Mammary epithelial cell (primary cell): ENCODE measurements at regions of chr18 and their contacts with region 1.

Region 1: DNA sequence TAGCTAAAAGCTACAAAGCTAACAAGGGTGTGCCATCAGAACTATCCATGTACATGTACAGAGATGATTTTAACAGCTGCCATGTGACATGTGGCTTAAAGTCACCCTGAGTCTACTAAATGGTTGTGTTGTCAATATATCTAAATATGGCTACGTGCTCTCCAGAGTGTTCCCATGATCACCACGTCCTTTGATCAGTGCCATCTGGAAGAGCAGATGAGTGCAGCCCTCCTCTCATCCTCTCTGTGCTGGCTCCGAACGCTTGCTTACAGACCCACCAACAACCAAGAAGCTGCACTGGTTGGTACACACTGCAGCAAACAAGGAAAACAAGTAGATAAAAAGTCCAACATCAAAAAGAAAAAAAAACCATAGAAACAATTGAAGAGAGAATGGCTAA is 88.6 kb upstream of the NARS1 start:
- DNase-seq: no peak
- H3K4me3 ChIP-seq: no peak overlapping the region
- H3K27ac ChIP-seq: no peak overlapping the region
- H3K4me1 ChIP-seq: peaks cover 9% of the 10 kb centered on the region
- H3K27me3 ChIP-seq: no peaks in the 10 kb centered on the region
- CTCF ChIP-seq: no peak

Region 2: GRCh38 chr18:57630002-57630753 is 80.0 kb before region 1 on chr18:
- CTCF ChIA-PET with region 1: no interaction called
- dilution Hi-C with region 1: no loop called
- in situ Hi-C with region 1: no loop called
- intact Hi-C with region 1: loop called (anchors 1 kb)
- DNase-seq: peak; percentile 93
- H3K4me3 ChIP-seq: peak overlapping the region; percentile 64 to 79 (median 68)
- H3K27ac ChIP-seq: peak overlapping the region; percentile 45
- H3K4me1 ChIP-seq: peaks cover 14% of the 10 kb centered on the region
- H3K27me3 ChIP-seq: no peaks in the 10 kb centered on the region
- CTCF ChIP-seq: peak; percentile 53 to 82

Region 3: DNA sequence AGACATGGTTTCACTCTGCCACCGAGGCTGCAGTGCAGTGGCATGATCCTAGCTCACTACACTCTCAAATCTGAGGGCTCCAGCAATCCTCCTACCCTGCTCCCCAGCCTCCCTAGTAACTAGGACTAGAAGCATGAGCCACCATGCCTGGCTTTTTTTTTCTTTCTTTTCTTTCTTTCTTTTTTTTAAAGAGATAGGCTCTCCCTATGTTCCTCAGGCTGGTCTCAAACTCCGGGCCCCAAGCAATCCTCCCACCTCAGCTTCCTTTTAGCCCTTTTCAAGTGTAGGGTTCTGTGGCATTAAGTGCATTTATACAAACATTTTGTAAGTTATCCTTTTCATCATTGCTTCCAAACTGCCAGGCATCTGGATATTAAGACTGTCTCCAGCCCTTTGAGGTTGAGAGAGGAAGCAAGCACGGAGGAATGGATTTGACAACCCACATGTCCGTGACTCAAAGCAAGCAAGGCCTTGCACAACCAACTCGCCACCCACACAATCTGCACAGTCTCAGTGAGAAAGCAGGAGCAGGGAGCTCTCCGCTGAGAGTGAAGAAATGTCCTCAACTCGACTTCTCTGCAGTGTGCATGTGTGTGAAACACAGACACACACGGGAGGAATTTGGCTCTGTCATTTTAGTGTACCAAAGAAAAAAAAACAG is 27.3 kb after region 1 on chr18:
- CTCF ChIA-PET with region 1: no interaction called
- dilution Hi-C with region 1: no loop called
- in situ Hi-C with region 1: no loop called
- intact Hi-C with region 1: loop called (anchors 1 kb)
- DNase-seq: peak; percentile 94
- H3K4me3 ChIP-seq: peak overlapping the region in 2 of 3 experiments; percentile 21 to 33
- H3K27ac ChIP-seq: peak overlapping the region; percentile 2
- H3K4me1 ChIP-seq: peaks cover 16% of the 10 kb centered on the region
- H3K27me3 ChIP-seq: no peaks in the 10 kb centered on the region
- CTCF ChIP-seq: no peak

Region 4: GRCh38 chr18:57789090-57789489 is 78.9 kb after region 1 on chr18:
- CTCF ChIA-PET with region 1: no interaction called
- dilution Hi-C with region 1: no loop called
- in situ Hi-C with region 1: no loop called
- intact Hi-C with region 1: loop called (anchors 5 kb)
- DNase-seq: peak; percentile 37
- H3K4me3 ChIP-seq: no peak overlapping the region
- H3K27ac ChIP-seq: peak overlapping the region; percentile 42
- H3K4me1 ChIP-seq: peaks cover 32% of the 10 kb centered on the region
- H3K27me3 ChIP-seq: no peaks in the 10 kb centered on the region
- CTCF ChIP-seq: no peak

Region 5: DNA sequence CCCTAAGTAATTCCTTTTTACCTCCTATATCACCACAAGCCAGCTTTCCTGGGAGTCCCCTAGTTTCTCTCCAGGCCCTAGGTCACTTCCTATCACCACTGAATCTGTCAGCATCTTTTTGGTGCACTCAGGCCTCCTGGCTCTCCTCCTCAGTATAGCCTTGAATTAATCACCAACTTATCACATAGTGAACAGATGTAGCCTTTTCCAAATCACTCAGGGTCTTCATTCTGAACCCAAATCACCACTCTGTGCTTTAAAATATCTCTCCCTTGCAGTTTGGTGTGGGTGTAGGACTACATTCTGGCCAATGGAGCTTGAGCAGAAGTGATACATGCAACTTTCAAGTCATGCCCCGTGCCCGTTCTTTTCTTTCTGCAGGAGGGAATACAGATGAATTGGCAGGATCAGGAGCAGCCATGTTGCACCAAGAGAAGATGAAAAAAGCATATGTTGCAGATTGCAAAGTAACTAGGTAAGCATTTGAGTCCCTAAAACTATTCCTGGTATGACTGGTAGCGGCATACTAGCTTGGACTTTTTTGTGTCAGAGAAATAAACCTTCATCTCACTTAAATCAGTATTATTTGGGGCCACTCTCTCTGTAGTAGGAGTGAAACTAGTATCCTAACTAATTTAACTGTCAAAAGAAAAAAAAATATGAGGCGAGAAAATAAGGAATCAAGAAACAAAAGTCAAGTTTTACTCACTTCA is 122.7 kb after region 1 on chr18:
- CTCF ChIA-PET with region 1: no interaction called
- dilution Hi-C with region 1: no loop called
- in situ Hi-C with region 1: no loop called
- intact Hi-C with region 1: no loop called
- DNase-seq: no peak
- H3K4me3 ChIP-seq: no peak overlapping the region
- H3K27ac ChIP-seq: no peak overlapping the region
- H3K4me1 ChIP-seq: no peaks in the 10 kb centered on the region
- H3K27me3 ChIP-seq: no peaks in the 10 kb centered on the region
- CTCF ChIP-seq: no peak

Region 6: DNA sequence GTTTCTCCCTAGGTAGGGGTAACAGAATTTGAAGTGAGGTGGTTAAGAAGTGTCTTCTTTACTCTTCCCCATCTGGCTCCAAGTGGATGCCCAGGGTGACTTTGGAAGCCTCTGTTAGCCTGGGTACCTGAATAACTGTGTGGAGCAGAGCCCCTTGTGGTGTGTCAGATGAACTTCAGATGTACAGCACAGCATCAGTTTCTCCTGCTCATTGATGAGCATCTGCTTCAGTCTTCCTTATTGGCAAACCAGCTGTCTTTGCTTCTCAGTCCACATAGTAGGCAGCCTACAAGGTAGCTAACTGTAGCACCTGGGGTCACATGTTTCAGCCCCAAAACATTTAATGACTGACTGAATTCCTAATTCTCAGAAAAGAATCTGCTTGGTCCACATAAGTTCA is 149.1 kb after region 1 on chr18:
- CTCF ChIA-PET with region 1: interaction called, 7 read pairs
- dilution Hi-C with region 1: no loop called
- in situ Hi-C with region 1: no loop called
- intact Hi-C with region 1: loop called (anchors 10 kb)
- DNase-seq: peak; percentile 40
- H3K4me3 ChIP-seq: no peak overlapping the region
- H3K27ac ChIP-seq: no peak overlapping the region
- H3K4me1 ChIP-seq: no peaks in the 10 kb centered on the region
- H3K27me3 ChIP-seq: no peaks in the 10 kb centered on the region
- CTCF ChIP-seq: peak; percentile 83 to 85